ENCODE measurements at regions of chr11 and their contacts with region 1.

Region 1: GRCh38 chr11:35662649-35663407 is at the start of gene TRIM44:
- DNase-seq: peak; percentile 73 to 84
- ATAC-seq: peak; percentile 95 to 97
- H3K4me3 ChIP-seq: peak within 1 kb of the TSS; percentile 82 to 91 (median 88)
- H3K27ac ChIP-seq: peak within 1 kb of the TSS; percentile 91 to 97 (median 94)
- H3K4me1 ChIP-seq: peaks cover 22 to 29% of the 10 kb centered on the region in 2 donors
- H3K27me3 ChIP-seq: no peaks in the 10 kb centered on the region
- CTCF ChIP-seq: no peak
- POLR2A ChIP-seq: peak; percentile 70 to 75
- total RNA-seq, gene TRIM44: 25.5 to 30.5 (median 26.2) TPM

Region 2: GRCh38 chr11:35675901-35676610 is 13.2 kb after region 1 on chr11:
- in situ Hi-C with region 1: no loop called
- intact Hi-C with region 1: loop called (anchors 2 kb)
- DNase-seq: no peak
- ATAC-seq: peak; percentile 79 to 85
- H3K4me3 ChIP-seq: peak overlapping the region in 1 of 4 donors; percentile 11
- H3K27ac ChIP-seq: peak overlapping the region; percentile 56 to 81 (median 66)
- H3K4me1 ChIP-seq: peaks cover 67 to 74% of the 10 kb centered on the region in 2 donors
- H3K27me3 ChIP-seq: no peaks in the 10 kb centered on the region
- CTCF ChIP-seq: no peak
- POLR2A ChIP-seq: no peak

Region 3: GRCh38 chr11:35714882-35715627 is 52.2 kb after region 1 on chr11:
- in situ Hi-C with region 1: no loop called
- intact Hi-C with region 1: no loop called
- DNase-seq: no peak
- ATAC-seq: no peak
- H3K4me3 ChIP-seq: no peak overlapping the region
- H3K27ac ChIP-seq: no peak overlapping the region
- H3K4me1 ChIP-seq: peaks cover 3 to 10% of the 10 kb centered on the region in 2 donors
- H3K27me3 ChIP-seq: no peaks in the 10 kb centered on the region
- CTCF ChIP-seq: no peak
- POLR2A ChIP-seq: no peak

Region 4: DNA sequence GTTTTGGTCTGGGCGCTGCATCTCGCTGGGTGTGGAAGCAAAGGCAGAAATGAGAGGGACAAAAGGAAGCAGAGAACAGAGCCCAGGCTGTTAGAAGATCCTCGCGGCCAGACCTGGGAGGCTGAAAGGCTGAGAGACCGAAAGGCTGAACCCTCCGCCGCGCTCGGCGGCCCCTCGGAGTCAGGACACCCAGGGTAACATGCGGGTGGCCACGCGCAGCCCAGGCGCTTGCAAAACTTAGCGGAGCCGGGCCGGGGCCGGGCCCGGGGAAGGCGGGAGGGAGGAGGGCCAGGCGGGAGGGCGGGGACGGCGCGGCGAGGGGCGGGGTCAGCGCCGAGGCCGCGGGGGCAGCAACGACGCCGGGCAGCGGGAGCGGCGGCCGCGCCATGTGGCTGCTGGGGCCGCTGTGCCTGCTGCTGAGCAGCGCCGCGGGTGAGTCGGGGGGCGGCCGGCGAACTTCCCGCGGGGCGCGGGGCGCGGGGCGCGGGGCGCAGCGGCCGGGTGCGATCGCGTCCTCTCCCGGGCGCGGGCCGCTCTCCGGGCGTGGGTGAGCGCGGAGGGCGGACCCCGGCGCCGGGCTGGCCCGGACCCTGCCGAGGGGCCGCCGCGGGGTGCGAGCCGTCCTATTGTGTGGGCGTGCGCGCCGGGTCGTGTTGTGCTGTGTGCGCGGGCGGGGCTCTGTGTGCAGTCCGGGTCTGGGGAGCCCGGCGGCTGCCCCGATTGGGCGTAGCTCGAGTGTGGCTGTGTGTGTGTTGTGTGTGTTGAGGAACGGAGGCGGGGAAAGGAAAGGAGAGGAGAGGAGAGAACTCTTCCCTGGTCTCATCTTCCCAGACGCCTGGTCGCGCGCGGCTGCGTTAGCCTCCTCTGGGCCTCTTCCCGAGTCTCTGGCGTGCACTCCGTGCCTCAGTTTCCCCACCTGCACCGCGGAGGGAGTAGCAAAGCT is 281.2 kb after region 1 on chr11 and contains the start of gene LDLRAD3:
- in situ Hi-C with region 1: no loop called
- intact Hi-C with region 1: loop called (anchors 5 kb)
- DNase-seq: peak; percentile 74 to 75
- ATAC-seq: peak; percentile 84
- H3K4me3 ChIP-seq: peak within 1 kb of the TSS; percentile 61 to 73 (median 66)
- H3K27ac ChIP-seq: peak within 1 kb of the TSS; percentile 71 to 85 (median 80)
- H3K4me1 ChIP-seq: peaks cover 15 to 21% of the 10 kb centered on the region in 2 donors
- H3K27me3 ChIP-seq: no peaks in the 10 kb centered on the region
- CTCF ChIP-seq: no peak
- POLR2A ChIP-seq: peak; percentile 59 to 67
- total RNA-seq, gene LDLRAD3: 6.1 to 12.8 (median 11.8) TPM

Region 5: GRCh38 chr11:35968386-35969088 is 305.7 kb after region 1 on chr11:
- in situ Hi-C with region 1: no loop called
- intact Hi-C with region 1: no loop called
- DNase-seq: no peak
- ATAC-seq: peak in 1 of 2 donors; percentile 57
- H3K4me3 ChIP-seq: no peak overlapping the region
- H3K27ac ChIP-seq: no peak overlapping the region
- H3K4me1 ChIP-seq: peaks cover 0 to 7% of the 10 kb centered on the region in 2 donors
- H3K27me3 ChIP-seq: no peaks in the 10 kb centered on the region
- CTCF ChIP-seq: no peak
- POLR2A ChIP-seq: no peak

Region 6: DNA sequence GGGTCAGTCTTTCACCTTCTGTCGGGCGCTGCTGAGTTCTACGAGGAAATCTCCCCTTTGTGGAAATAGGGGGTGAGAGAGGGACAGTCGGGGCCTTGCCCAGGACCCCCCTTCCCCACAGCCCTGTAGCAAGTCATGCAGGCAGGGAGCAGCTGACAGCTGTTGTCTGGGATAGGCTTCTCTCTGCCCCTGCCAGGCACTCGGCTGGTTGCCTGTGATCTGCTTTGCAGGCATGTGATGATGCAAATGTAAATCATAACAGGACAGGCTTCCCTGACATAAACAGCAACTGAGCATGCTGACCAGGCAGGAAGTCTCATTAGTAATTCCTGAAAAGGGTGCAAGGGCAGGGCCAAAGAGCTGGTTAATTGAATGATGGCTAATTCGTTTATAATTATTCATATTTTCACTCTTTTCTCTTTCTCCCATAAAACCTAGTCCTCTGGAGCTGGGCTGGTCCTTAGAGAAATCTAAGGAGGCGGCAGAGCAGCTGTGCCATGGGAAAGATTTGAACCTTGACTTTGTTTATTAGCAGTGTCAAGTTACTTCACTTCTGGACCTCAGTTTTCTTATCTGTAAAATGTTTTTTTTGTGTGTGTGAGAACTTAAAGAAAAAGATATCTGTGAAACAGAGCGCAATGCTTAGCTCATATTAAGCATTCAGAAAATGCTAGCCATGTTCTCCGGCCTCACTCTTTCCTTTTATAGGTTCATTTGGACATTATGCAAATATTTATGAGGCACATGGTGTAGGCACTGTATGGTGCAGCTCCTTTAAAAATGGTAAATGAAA is 410.8 kb after region 1 on chr11:
- in situ Hi-C with region 1: no loop called
- intact Hi-C with region 1: loop called (anchors 5 kb)
- DNase-seq: peak; percentile 86
- ATAC-seq: peak; percentile 96
- H3K4me3 ChIP-seq: peak overlapping the region in 1 of 4 donors; percentile 19
- H3K27ac ChIP-seq: peak overlapping the region; percentile 47 to 71 (median 66)
- H3K4me1 ChIP-seq: peaks cover 23 to 31% of the 10 kb centered on the region in 2 donors
- H3K27me3 ChIP-seq: no peaks in the 10 kb centered on the region
- CTCF ChIP-seq: no peak
- POLR2A ChIP-seq: peak in 1 of 2 donors; percentile 23

Region 7: GRCh38 chr11:36289226-36289852 is 626.5 kb after region 1 on chr11 and contains the start of gene COMMD9:
- in situ Hi-C with region 1: no loop called
- intact Hi-C with region 1: loop called (anchors 2 kb)
- DNase-seq: peak; percentile 92
- ATAC-seq: peak; percentile 96 to 99
- H3K4me3 ChIP-seq: peak within 1 kb of the TSS; percentile 70 to 86 (median 79)
- H3K27ac ChIP-seq: peak within 1 kb of the TSS; percentile 63 to 80 (median 68)
- H3K4me1 ChIP-seq: peaks cover 13 to 15% of the 10 kb centered on the region in 2 donors
- H3K27me3 ChIP-seq: no peaks in the 10 kb centered on the region
- CTCF ChIP-seq: no peak
- POLR2A ChIP-seq: peak in 1 of 2 donors; percentile 28
- total RNA-seq, gene COMMD9: 51.8 to 68.6 (median 57.7) TPM

Measured in gastrocnemius medialis (tissue), 4 donors.